HEK293 (cell line): ENCODE measurements at regions of chr17 and their contacts with region 1.

Region 1: GRCh38 chr17:57861000-57861789 is 11.4 kb upstream of the MRPS23 start:
- H3K4me3 ChIP-seq: no peak overlapping the region
- H3K27ac ChIP-seq: peak overlapping the region; percentile 38; the same call in 1 of the 2 replicates
- H3K4me1 ChIP-seq: peaks cover 4% of the 10 kb centered on the region; the same call in 1 of the 2 replicates
- CTCF ChIP-seq: no peak

Region 2: DNA sequence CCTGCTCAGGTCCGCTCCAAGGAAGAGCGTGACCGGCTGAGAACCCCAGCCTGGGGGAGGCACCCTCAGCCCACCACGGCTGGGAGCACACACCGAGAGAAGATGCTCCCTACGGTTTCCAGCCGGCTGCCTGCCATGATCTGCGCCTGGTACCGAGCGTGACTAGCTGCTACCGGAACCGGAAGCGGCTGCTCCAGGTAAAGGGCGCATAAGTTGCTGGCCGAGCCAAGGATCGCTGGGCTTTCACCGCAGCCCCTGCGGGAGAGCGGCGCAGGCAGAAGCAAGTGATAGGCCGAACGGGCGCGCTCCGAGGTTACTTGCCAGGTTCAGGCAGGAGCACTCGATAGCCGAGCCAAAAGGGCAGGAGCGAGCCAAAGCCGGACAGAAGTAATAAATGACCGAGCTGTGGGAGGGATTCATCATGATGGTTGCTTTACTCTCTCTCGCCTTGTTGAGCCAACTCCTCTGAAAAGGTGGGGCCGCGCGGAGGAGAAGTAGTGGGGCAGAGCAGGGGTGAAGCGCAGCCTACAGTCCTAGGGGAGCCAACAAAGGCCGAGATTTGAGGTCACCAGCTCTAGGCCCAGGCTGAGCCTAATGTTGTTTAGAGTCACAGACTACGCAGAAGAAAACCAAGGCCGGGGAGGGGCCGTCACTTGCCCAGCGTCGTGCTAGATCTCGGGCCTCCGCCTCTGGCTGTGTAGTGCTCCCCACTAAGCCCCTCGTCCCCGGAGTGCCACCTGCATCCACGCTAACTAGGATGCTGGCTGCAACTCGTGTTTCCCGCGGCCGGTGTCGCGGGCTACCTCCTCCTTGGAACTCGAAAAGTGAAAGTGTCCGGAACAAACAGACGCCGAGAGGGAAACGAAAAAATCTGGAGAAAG is 11.1 kb before region 1 on chr17 and contains the start of gene MRPS23:
- CTCF ChIA-PET with region 1: interaction called, 78 read pairs
- POLR2A ChIA-PET with region 1: interaction called, 26 read pairs
- H3K4me3 ChIP-seq: peak within 1 kb of the TSS; percentile 99
- H3K27ac ChIP-seq: peak within 1 kb of the TSS; percentile 84
- H3K4me1 ChIP-seq: peaks cover 17% of the 10 kb centered on the region
- CTCF ChIP-seq: no peak

Region 3: DNA sequence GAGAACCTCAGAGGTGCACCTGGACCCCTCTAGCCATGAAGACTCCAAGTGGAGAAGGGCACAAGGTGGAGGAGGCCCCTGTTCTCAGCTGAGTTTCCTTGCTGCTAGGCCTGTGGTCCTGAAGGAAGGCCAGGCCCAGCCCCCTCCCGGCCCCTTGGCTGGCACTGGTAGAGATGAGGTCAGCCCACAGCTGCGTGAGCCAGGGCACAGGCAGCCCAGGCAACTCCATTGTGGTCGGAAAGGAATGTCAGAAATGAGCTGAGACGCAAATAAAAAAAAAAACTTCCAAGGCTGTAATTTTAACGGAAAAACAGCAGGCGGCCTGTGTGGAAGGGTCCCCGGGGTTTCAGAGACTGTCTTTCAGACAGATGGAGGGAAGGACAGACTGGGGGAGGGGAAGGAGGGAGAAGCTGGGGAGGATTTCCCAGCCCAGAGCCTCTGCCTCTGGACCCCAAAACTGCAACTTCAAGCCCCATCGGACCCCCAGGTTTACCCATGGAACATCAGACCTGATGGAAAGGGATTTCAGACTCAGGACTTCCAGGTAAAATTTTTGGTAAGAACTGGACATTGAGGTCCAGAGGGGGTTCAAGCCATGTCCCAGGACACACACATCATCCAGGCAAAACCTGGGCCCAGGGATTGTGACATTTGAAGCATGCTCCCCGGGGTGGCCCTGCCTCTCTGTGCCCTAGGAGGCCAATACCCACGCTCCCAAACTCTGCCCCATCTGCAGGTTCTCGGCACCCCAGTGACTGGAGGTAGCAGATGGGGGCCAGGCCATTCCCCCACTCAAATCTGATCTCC is 14.3 kb after region 1 on chr17:
- CTCF ChIA-PET with region 1: interaction called, 78 read pairs
- POLR2A ChIA-PET with region 1: interaction called, 10 read pairs
- H3K4me3 ChIP-seq: no peak overlapping the region
- H3K27ac ChIP-seq: peak overlapping the region; percentile 87
- H3K4me1 ChIP-seq: peaks cover 21% of the 10 kb centered on the region
- CTCF ChIP-seq: peak; percentile 65

Region 4: DNA sequence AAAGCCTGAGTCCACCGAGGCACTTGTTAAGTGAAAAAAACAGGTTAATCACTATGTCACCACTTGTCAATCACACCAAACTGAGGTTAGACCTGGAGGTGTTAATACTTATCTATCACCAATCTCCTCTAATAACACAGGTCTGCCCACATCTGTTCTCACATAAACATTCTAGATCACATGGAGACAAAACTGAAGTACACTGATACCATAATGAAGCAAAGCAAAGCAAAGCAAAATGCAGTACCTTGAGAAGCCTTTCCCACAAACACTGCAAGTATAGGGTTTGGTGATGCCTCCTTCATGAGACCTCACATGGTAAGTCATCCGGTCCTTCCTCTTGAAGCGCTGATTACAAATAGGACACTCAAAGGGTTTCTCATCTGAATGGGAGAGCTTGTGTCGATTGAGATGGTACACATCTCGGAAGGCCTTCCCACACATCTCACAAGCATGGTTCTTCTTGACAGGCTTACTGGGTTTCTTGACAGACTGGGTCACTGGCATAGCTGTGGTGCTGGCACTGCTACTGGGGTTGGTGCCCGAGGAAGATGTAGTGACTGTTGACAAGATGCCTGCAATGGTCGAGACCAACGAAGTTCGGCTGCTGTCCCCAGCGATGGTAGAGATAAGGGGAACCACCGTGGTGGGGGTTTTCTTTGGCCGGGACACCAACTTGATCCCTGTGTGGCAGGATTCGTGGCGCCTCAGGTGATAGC is 121.4 kb after region 1 on chr17:
- CTCF ChIA-PET with region 1: interaction called, 15 read pairs
- POLR2A ChIA-PET with region 1: interaction called, 9 read pairs
- H3K4me3 ChIP-seq: no peak overlapping the region
- H3K27ac ChIP-seq: no peak overlapping the region
- H3K4me1 ChIP-seq: peaks cover 26% of the 10 kb centered on the region
- CTCF ChIP-seq: no peak

Region 5: GRCh38 chr17:58112970-58113631 is 251.9 kb after region 1 on chr17:
- CTCF ChIA-PET with region 1: interaction called, 64 read pairs
- POLR2A ChIA-PET with region 1: no interaction called
- H3K4me3 ChIP-seq: no peak overlapping the region
- H3K27ac ChIP-seq: no peak overlapping the region
- H3K4me1 ChIP-seq: no peaks in the 10 kb centered on the region
- CTCF ChIP-seq: peak; percentile 92

Region 6: DNA sequence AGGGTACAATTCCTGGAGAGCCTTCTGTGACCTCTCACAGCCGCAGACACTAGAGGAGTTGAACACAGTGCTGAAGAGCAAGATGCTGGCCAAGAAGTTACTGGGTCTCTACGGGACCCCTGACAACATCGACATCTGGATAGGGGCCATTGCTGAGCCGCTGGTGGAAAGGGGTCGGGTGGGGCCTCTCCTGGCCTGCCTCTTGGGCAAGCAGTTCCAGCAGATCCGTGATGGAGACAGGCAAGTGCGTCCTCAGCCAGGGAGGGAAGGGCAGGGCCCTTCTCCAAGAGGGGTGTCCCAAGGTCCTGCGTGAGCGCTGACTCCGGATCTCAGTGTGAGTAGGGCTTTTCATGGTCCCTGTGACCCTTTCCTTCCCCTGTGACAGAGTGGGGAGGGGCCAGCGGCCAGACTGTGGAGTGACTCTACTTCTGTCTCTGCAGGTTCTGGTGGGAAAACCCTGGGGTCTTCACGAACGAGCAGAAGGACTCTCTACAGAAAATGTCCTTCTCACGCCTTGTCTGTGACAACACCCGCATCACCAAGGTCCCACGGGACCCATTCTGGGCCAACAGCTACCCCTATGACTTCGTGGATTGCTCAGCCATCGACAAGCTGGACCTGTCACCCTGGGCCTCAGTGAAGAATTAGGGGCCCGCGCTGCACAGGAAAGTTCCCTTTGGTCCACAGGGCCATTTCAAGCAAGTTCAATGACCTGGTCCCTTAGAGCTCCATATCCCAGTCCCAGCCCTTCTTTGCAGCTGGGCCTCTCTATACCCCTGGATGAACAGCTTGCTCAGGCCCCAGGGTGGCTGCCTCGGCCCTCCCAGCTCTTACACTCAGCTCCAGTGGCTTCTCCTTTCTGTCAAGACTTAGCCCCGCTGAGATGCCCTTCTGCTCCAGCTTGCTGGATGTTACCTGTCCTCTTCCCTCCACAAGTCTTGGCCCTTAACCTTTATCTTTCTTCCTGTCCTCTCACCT is 406.4 kb after region 1 on chr17:
- CTCF ChIA-PET with region 1: no interaction called
- POLR2A ChIA-PET with region 1: no interaction called
- H3K4me3 ChIP-seq: no peak overlapping the region
- H3K27ac ChIP-seq: no peak overlapping the region
- H3K4me1 ChIP-seq: no peaks in the 10 kb centered on the region
- CTCF ChIP-seq: no peak